ENCODE measurements at regions of chr19 and their contacts with region 1.

Region 1: DNA sequence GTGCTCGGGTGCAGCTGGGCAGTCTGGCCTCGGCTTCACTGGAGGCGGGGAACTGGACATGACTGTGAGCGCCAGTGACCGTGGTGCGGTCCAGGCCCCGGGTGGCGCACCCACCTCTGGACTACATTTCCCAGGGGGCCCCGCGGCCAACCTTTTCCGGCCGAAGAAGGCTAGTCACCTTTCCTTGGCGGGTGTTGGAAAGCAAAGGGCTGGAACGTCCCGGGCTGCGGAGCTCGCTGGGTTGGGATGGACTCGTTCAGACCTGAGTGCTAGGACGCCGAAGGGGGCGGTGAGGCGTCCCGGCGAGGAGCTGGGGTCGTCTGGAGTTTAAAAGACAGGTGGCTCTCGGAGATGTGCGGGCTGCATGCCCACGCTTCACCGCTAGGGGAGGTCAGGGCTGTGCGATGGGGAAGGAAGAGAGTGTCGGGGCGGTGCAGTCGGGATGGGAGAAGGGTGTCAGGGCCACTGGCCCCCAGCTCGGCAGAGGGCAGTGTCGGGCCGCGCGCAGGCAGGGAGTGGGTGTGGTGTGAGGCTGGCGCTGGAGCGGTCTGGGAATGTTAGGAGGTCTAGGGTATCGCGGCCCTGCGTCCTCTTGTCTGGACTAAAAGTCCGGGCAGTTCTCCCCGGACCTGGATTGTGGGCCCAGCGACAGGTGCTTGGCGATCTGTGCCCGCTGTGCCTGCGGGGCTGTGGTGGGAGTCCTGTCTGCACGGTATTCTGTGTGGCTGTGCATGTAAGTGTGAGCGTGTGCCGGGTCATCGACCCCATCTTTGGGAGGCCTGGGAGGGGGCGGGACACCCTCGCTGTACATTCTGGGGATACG is 57.1 kb downstream of the ZNF568 start:
- DNase-seq: peak; percentile 48
- ATAC-seq: peak; percentile 100
- H3K4me3 ChIP-seq: peak overlapping the region; percentile 76 to 87
- H3K27ac ChIP-seq: peak overlapping the region; percentile 91
- H3K4me1 ChIP-seq: peaks cover 5% of the 10 kb centered on the region; the same call in 1 of the 2 replicates
- H3K27me3 ChIP-seq: no peaks in the 10 kb centered on the region
- CTCF ChIP-seq: peak; percentile 95

Region 2: GRCh38 chr19:36894849-36895383 is 78.3 kb before region 1 on chr19:
- CTCF ChIA-PET with region 1: no interaction called
- POLR2A ChIA-PET with region 1: no interaction called
- in situ Hi-C with region 1: no loop called
- intact Hi-C with region 1: no loop called
- DNase-seq: no peak
- ATAC-seq: no peak
- H3K4me3 ChIP-seq: no peak overlapping the region
- H3K27ac ChIP-seq: no peak overlapping the region
- H3K4me1 ChIP-seq: no peaks in the 10 kb centered on the region
- H3K27me3 ChIP-seq: no peaks in the 10 kb centered on the region
- CTCF ChIP-seq: no peak

Region 3: DNA sequence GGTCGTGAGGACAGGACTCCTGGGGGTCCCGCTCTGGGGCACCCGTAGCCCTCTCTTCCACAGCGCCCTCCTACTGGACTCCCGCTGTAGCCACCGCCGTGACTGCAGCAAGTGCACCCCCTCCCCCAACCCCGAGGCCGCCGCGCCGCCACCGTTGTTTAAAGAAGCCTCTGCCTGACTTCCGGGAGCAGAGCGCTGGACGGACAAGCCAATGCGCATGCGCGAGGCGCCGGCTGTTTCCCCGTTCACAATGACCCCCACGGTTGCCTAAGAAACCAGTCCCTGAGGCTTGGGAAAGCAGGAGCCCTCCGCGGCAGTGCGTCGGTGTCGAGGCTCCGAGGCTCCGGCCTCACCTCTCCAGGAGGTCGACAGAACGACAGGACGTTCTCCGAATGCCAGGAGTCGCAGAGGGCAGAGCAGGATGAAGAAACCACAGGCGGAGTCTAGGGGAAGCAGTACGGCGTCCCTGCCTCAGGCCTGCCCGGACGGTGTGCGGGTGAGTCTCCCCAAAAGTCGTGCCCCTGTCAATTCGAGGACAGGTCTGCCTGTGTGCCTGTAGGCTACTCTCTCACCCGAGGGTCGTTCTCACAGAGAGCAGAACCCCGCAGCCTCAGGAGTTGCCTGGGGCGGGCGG is 34.5 kb after region 1 on chr19:
- CTCF ChIA-PET with region 1: no interaction called
- POLR2A ChIA-PET with region 1: no interaction called
- in situ Hi-C with region 1: no loop called
- intact Hi-C with region 1: no loop called
- DNase-seq: no peak
- ATAC-seq: no peak
- H3K4me3 ChIP-seq: no peak overlapping the region
- H3K27ac ChIP-seq: no peak overlapping the region
- H3K4me1 ChIP-seq: no peaks in the 10 kb centered on the region
- H3K27me3 ChIP-seq: no peaks in the 10 kb centered on the region
- CTCF ChIP-seq: no peak

Region 4: DNA sequence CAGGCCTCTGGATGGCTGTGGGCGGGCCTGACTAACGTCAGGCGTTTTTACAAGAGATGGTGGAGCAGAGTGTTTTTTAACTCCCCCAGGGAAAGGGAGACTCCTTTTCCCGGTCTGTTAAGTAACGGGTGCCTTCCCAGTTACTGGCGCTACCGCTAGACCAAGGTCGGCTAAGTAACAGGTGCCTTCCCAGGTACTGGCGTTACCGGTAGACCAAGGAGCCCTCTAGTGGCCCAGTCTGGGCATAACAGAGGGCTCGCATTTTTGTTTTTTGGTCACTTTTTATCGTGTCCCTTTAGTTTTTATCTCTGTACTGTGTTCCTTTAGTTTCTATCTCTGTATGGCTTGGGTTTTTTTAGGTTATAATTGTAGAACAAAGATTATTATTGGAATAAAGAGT is 254.8 kb after region 1 on chr19:
- CTCF ChIA-PET with region 1: no interaction called
- POLR2A ChIA-PET with region 1: interaction called, 11 read pairs
- in situ Hi-C with region 1: no loop called
- intact Hi-C with region 1: no loop called
- DNase-seq: no peak
- ATAC-seq: no peak
- H3K4me3 ChIP-seq: no peak overlapping the region
- H3K27ac ChIP-seq: no peak overlapping the region
- H3K4me1 ChIP-seq: no peaks in the 10 kb centered on the region
- H3K27me3 ChIP-seq: no peaks in the 10 kb centered on the region
- CTCF ChIP-seq: no peak; the same call in none of the 2 replicates

Measured in Panc1 (cell line).